Tibial artery (tissue), 4 donors: ENCODE measurements at regions of chr6 and their contacts with region 1.

Region 1: GRCh38 chr6:109187399-109188114 is 92.2 kb downstream of the CEP57L1 start:
- DNase-seq: peak in 1 of 2 donors; percentile 35
- H3K4me3 ChIP-seq: no peak overlapping the region
- H3K27ac ChIP-seq: no peak overlapping the region
- H3K4me1 ChIP-seq: peaks cover 0 to 3% (median 1%) of the 10 kb centered on the region in 4 donors
- H3K27me3 ChIP-seq: no peaks in the 10 kb centered on the region
- CTCF ChIP-seq: peak; percentile 91 to 95

Region 2: DNA sequence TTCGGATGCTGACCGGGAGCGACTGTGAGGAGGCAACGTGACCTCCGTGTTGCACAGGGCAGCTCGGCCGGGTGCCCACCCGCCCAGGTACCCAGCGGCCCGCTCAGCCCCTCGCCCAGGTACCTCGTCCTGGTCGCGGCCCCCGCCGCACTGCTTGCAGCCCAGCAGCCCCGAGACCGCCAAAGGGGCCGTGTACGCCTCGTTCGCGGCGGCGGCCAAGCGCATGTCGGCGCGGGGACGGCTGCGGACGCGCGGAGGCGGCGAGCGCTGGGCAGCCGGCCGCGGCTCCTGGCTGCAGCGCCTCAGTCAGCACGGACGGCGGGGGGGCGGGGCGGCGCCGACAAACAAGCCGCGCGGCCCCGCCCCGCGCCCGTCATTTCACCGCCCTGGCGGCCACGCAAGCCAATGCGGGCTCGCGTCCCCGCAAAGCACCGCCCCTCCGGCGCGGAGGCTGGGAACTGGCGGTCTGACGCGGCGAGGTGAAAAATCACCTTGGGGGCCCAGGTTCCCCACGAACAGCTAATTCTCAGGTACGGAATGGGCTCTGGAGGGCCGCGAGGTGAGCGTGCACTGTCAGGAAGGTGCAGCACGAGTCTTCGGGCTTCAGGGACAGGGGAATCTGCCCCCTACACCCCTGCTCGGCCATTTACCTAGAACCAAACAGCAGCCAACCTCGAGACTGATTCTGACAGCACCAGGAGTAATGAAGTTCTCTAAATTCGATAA is 178.2 kb before region 1 on chr6:
- intact Hi-C with region 1: no loop called
- DNase-seq: peak; percentile 96
- H3K4me3 ChIP-seq: peak overlapping the region; percentile 65 to 87
- H3K27ac ChIP-seq: peak overlapping the region; percentile 81 to 86
- H3K4me1 ChIP-seq: peaks cover 0 to 48% (median 19%) of the 10 kb centered on the region in 4 donors
- H3K27me3 ChIP-seq: no peaks in the 10 kb centered on the region
- CTCF ChIP-seq: peak; percentile 41 to 66

Region 3: GRCh38 chr6:109440331-109441068 is 252.9 kb after region 1 on chr6 and contains the starts of genes PPIL6 and SMPD2:
- intact Hi-C with region 1: loop called (anchors 5 kb)
- DNase-seq: peak; percentile 88 to 94
- H3K4me3 ChIP-seq: peak within 1 kb of the TSS; percentile 85 to 86
- H3K27ac ChIP-seq: peak within 1 kb of the TSS; percentile 81 to 89
- H3K4me1 ChIP-seq: peaks cover 0 to 22% (median 13%) of the 10 kb centered on the region in 4 donors
- H3K27me3 ChIP-seq: no peaks in the 10 kb centered on the region
- CTCF ChIP-seq: peak in 1 of 2 experiments; percentile 23